PC-3 (cell line): ENCODE measurements at regions of chr2 and their contacts with region 1.

Region 1: GRCh38 chr2:157838442-157839161 is 37.5 kb downstream of the ACVR1 start:
- DNase-seq: peak; percentile 71
- ATAC-seq: peak; percentile 96
- H3K4me3 ChIP-seq: no peak overlapping the region; the same call in 1 of the 2 replicates
- H3K27ac ChIP-seq: peak overlapping the region; percentile 69
- H3K4me1 ChIP-seq: peaks cover 25% of the 10 kb centered on the region
- H3K27me3 ChIP-seq: no peaks in the 10 kb centered on the region
- CTCF ChIP-seq: no peak

Region 2: DNA sequence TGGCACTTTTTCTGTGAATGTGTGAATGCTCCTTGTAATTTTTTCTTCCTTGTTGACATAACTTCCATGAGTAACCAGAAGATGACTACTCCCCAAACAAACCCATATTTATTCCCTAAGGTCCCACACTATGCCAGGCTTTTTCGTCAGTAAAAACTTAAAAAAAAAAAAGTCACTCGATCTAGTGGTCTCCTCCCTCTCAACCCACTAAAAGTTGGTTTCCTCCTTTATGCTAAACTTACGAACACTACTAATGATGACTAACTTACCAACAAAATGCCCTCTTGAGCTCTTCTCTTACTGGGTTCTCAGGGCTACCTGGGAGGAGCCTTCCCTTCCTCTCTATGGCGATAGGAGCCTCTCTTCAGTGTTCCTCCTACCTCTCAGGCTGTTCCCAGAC is 19.3 kb after region 1 on chr2:
- CTCF ChIA-PET with region 1: no interaction called
- POLR2A ChIA-PET with region 1: no interaction called
- intact Hi-C with region 1: no loop called
- DNase-seq: peak; percentile 91
- ATAC-seq: peak; percentile 84
- H3K4me3 ChIP-seq: no peak overlapping the region
- H3K27ac ChIP-seq: peak overlapping the region; percentile 97
- H3K4me1 ChIP-seq: peaks cover 42% of the 10 kb centered on the region
- H3K27me3 ChIP-seq: no peaks in the 10 kb centered on the region
- CTCF ChIP-seq: no peak

Region 3: GRCh38 chr2:157952558-157952957 is 114.0 kb after region 1 on chr2:
- CTCF ChIA-PET with region 1: no interaction called
- POLR2A ChIA-PET with region 1: no interaction called
- intact Hi-C with region 1: no loop called
- DNase-seq: no peak
- ATAC-seq: no peak
- H3K4me3 ChIP-seq: no peak overlapping the region
- H3K27ac ChIP-seq: no peak overlapping the region
- H3K4me1 ChIP-seq: no peaks in the 10 kb centered on the region
- H3K27me3 ChIP-seq: no peaks in the 10 kb centered on the region
- CTCF ChIP-seq: no peak

Region 4: GRCh38 chr2:158066046-158066713 is 227.6 kb after region 1 on chr2:
- CTCF ChIA-PET with region 1: interaction called, 14 read pairs
- POLR2A ChIA-PET with region 1: no interaction called
- intact Hi-C with region 1: no loop called
- DNase-seq: no peak
- ATAC-seq: no peak
- H3K4me3 ChIP-seq: no peak overlapping the region
- H3K27ac ChIP-seq: no peak overlapping the region
- H3K4me1 ChIP-seq: no peaks in the 10 kb centered on the region
- H3K27me3 ChIP-seq: no peaks in the 10 kb centered on the region
- CTCF ChIP-seq: no peak